Vagina (tissue), 2 donors: ENCODE measurements at regions of chr15 and their contacts with region 1.

Region 1: GRCh38 chr15:94168247-94168646 is 63.1 kb upstream of the MCTP2 start:
- DNase-seq: no peak
- H3K4me3 ChIP-seq: no peak overlapping the region
- H3K27ac ChIP-seq: no peak overlapping the region
- H3K4me1 ChIP-seq: no peaks in the 10 kb centered on the region
- H3K27me3 ChIP-seq: no peaks in the 10 kb centered on the region
- CTCF ChIP-seq: no peak
- POLR2A ChIP-seq: no peak

Region 2: DNA sequence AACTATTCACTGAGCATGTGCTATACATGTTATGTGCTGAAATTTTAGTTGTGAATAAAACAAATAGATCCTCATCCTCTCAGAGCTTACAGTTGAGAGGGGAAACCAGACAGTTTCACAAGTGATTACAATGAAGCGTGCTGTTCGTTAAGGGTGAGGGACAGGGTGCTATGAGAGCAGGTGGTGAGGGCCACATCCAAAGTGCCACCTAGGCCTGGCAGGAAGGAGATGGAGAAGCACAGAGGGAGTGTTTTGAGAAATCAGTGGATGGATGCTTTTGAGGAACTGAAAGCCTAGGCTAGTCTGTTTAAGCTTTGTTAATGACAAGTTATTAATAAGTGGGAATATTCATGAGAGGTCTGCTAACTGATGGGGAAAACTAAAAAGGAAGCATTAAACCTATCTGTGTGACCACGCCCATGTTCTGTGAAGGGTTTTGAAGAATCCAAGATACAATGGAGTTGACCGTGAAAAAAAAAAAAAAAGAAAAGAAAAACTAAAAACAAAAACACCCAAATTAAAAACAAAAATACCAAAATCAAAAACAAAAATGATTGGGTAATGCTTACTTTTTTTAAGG is 70.4 kb after region 1 on chr15:
- intact Hi-C with region 1: loop called (anchors 5 kb)
- DNase-seq: no peak
- H3K4me3 ChIP-seq: no peak overlapping the region
- H3K27ac ChIP-seq: no peak overlapping the region
- H3K4me1 ChIP-seq: peaks cover 16% of the 10 kb centered on the region
- H3K27me3 ChIP-seq: no peaks in the 10 kb centered on the region
- CTCF ChIP-seq: no peak
- POLR2A ChIP-seq: no peak